ENCODE measurements at regions of chr1 and their contacts with region 1.

Region 1: DNA sequence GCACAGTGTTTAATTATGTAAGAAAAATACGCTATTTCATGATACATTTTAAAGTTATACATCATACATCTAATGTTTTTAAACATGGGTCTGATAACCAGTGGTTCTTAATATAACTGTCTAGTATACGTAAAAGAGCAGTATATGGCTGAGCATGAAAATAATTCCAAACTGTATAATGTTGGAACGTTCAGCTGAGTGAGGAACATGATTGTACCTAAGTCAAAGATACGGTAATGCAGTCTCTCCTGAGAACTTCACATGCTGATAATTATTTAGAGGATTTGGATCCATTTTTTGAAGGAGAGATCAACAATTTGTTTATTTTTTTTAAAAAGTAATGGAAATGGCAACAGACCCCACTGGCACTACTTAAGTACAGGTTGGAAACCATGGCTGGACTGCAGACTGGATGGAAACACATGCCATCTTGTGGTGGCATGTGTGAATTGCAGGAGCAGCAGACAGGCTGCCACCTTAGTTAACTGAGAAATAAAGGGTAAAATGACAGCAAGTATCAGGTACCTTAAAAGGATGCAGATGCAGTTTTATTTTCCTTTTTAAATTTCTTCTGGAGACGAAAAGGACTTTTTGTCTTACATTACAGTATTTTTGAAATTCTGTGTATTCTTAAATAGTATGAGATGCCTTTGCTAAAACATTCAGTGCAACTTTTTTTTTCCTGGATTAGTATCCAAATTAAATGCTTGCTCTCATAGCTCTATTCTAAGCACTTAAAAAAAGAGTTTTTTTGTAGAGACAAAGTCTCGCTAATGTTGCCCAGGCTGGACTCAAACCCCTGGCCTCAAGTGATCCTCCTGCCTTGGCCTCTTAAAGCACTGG is 73.8 kb downstream of the MTR start:
- DNase-seq: peak; percentile 69 to 83 (median 76)
- H3K4me3 ChIP-seq: no peak overlapping the region
- H3K27ac ChIP-seq: no peak overlapping the region
- H3K4me1 ChIP-seq: peaks cover 0 to 13% (median 0%) of the 10 kb centered on the region in 4 experiments
- H3K27me3 ChIP-seq: no peaks in the 10 kb centered on the region

Region 2: DNA sequence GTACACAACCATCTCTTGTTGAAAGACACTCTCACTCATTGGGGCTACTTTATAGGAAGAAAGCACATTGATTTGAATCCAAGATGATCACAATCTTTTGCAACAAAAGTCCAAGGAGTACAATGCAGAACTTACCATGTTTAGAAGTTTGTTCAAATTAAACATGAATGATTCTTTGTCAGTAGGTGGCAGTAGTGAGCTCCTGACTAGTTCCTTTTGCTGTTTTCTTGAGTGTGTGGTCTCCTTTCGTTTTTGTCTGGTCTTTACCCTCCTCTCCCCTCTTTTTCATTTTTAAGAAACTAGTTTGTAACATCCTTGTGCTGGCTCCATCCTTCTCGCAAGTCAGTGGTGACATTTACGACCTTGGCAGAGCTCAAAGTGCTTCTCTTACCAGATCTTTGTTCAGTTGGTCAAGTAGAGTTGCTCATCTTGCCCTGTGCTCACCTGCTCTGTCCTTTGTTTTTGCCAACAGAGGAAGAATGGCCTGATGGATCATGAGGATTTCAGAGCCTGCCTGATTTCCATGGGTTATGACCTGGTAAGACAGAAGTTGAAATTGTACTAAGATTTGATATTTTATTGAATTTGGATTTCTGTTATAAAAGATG is 109.5 kb before region 1 on chr1:
- CTCF ChIA-PET with region 1: interaction called, 15 read pairs
- POLR2A ChIA-PET with region 1: no interaction called
- DNase-seq: peak; percentile 65 to 80 (median 72)
- H3K4me3 ChIP-seq: no peak overlapping the region
- H3K27ac ChIP-seq: no peak overlapping the region
- H3K4me1 ChIP-seq: no peaks in the 10 kb centered on the region
- H3K27me3 ChIP-seq: peaks cover 0 to 2% (median 0%) of the 10 kb centered on the region in 5 experiments

Region 3: DNA sequence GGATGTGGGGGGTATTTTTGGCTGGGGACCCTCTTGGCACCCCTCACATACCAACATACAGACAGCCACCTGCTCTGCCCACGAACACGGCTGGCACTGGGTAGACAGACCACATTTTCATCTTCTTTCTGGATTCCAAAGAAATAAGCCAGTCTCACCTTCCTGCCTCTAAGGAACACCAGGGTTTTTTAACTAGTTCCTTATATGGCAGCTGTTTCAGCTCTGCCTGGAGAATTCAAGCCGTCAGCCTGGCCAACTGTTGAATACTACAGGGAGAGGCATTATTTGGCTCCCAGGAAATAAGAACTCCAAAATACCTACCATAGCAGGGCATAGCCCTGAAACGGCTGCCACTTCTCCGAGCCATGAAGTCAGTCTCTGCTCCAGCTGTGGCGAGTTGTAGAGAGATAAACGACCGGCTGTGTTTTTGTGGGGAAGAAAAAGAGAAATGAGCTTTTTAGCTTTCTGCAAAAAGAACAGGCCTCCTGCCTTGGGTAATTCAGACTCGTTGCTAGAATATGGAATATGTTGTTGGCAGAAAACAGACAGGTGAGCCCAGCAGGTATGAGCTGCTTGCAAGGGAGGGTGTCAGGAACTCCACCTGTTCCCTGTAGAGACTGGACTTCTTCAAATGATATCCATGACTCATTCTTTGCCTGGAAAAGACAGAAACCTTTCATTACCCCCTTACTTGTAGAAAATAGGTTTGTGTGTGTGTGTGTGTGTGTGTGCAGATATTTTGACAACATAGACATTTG is 83.6 kb after region 1 on chr1:
- CTCF ChIA-PET with region 1: no interaction called
- POLR2A ChIA-PET with region 1: no interaction called
- DNase-seq: no peak
- H3K4me3 ChIP-seq: no peak overlapping the region
- H3K27ac ChIP-seq: no peak overlapping the region
- H3K4me1 ChIP-seq: no peaks in the 10 kb centered on the region
- H3K27me3 ChIP-seq: peaks cover 0 to 2% (median 0%) of the 10 kb centered on the region in 5 experiments